MCF 10A (cell line): ENCODE measurements at regions of chr18 and their contacts with region 1.

Region 1: GRCh38 chr18:21444465-21445023 is 156.0 kb downstream of the ESCO1 start:
- DNase-seq: peak; percentile 66
- H3K4me3 Mint-ChIP-seq: no peak overlapping the region
- H3K27ac Mint-ChIP-seq: no peak overlapping the region
- H3K4me1 Mint-ChIP-seq: peaks cover 11% of the 10 kb centered on the region
- H3K27me3 Mint-ChIP-seq: no peaks in the 10 kb centered on the region
- CTCF ChIP-seq: peak; percentile 78

Region 2: GRCh38 chr18:21191596-21192307 is 252.8 kb before region 1 on chr18:
- CTCF ChIA-PET with region 1: interaction called, 192 read pairs
- POLR2A ChIA-PET with region 1: interaction called, 7 read pairs
- intact Hi-C with region 1: loop called (anchors 1 kb)
- DNase-seq: peak; percentile 65
- H3K4me3 Mint-ChIP-seq: no peak overlapping the region
- H3K27ac Mint-ChIP-seq: no peak overlapping the region
- H3K4me1 Mint-ChIP-seq: peaks cover 4% of the 10 kb centered on the region
- H3K27me3 Mint-ChIP-seq: peaks cover 24% of the 10 kb centered on the region
- CTCF ChIP-seq: peak; percentile 39

Region 3: DNA sequence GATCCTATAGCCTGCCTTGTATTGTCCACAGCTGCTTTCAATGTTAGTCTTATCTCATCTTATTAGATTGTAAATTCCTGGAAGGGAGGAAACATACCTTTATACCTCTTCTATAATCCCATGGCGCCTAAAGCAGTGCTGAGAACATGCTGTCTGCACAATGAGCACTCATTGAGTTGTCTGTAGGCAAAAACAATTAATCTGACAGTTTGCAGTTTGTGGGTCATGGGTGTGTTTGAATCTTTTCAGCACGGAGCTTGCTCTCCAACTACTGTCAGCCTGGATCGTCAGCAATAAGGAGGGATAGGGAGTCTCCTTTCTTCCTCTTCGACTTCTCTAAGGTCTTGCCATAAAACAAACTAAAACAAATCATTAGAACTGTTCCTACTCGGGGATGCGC is 229.1 kb before region 1 on chr18:
- CTCF ChIA-PET with region 1: interaction called, 19 read pairs
- POLR2A ChIA-PET with region 1: no interaction called
- intact Hi-C with region 1: no loop called
- DNase-seq: no peak
- H3K4me3 Mint-ChIP-seq: no peak overlapping the region
- H3K27ac Mint-ChIP-seq: no peak overlapping the region
- H3K4me1 Mint-ChIP-seq: no peaks in the 10 kb centered on the region
- H3K27me3 Mint-ChIP-seq: no peaks in the 10 kb centered on the region
- CTCF ChIP-seq: no peak

Region 4: DNA sequence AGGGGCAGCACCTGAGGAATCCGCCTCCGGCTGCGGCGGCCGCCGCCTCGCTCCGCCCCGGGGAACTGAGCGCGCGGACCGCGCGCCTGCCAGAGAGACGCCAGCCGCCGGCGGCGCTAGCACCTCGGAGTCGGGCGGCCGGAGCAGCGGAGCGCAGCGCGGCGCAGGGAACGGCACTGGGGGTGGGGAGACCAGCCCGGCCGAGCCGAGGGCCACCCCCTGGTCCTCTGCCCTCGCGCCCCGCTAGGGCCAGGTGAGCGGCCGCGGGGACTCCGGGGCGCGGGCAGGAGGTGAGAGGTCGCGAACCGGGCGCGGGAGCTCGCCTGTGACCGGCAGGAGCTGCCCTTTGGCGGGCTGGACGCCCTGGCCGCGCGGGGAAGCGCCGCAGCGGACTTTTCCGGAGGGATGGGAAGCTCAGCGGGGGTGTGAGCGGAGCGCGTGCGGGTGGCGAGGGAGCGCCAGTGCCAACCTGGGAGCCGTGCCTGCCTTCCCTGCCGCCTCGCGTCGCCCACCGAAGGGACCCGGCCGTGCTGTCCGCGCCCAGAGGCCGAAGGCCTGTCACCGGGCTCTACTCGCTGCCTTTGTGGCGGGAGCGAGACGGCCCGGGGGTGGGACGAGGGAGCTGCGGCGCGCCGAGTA is 202.3 kb before region 1 on chr18 and contains the start of gene GREB1L:
- CTCF ChIA-PET with region 1: interaction called, 27 read pairs
- POLR2A ChIA-PET with region 1: interaction called, 8 read pairs
- intact Hi-C with region 1: loop called (anchors 1 kb)
- DNase-seq: peak; percentile 67
- H3K4me3 Mint-ChIP-seq: peak within 1 kb of the TSS; percentile 78
- H3K27ac Mint-ChIP-seq: peak within 1 kb of the TSS; percentile 49
- H3K4me1 Mint-ChIP-seq: peaks cover 5% of the 10 kb centered on the region
- H3K27me3 Mint-ChIP-seq: no peaks in the 10 kb centered on the region
- CTCF ChIP-seq: peak; percentile 35
- total RNA-seq, gene GREB1L: 9.4 and 11.0 TPM in 2 replicates

Region 5: GRCh38 chr18:21391074-21391673 is 53.4 kb before region 1 on chr18:
- CTCF ChIA-PET with region 1: interaction called, 7 read pairs
- POLR2A ChIA-PET with region 1: interaction called, 7 read pairs
- intact Hi-C with region 1: loop called (anchors 1 kb)
- DNase-seq: peak; percentile 84
- H3K4me3 Mint-ChIP-seq: peak overlapping the region; percentile 23
- H3K27ac Mint-ChIP-seq: peak overlapping the region; percentile 51
- H3K4me1 Mint-ChIP-seq: peaks cover 16% of the 10 kb centered on the region
- H3K27me3 Mint-ChIP-seq: no peaks in the 10 kb centered on the region
- CTCF ChIP-seq: no peak

Region 6: GRCh38 chr18:21402272-21402671 is 42.3 kb before region 1 on chr18:
- CTCF ChIA-PET with region 1: no interaction called
- POLR2A ChIA-PET with region 1: no interaction called
- intact Hi-C with region 1: no loop called
- DNase-seq: no peak
- H3K4me3 Mint-ChIP-seq: no peak overlapping the region
- H3K27ac Mint-ChIP-seq: no peak overlapping the region
- H3K4me1 Mint-ChIP-seq: peaks cover 8% of the 10 kb centered on the region
- H3K27me3 Mint-ChIP-seq: no peaks in the 10 kb centered on the region
- CTCF ChIP-seq: no peak

Region 7: GRCh38 chr18:21433436-21433835 is 11.1 kb before region 1 on chr18:
- CTCF ChIA-PET with region 1: interaction called, 15 read pairs
- POLR2A ChIA-PET with region 1: no interaction called
- intact Hi-C with region 1: no loop called
- DNase-seq: peak; percentile 16
- H3K4me3 Mint-ChIP-seq: no peak overlapping the region
- H3K27ac Mint-ChIP-seq: no peak overlapping the region
- H3K4me1 Mint-ChIP-seq: no peaks in the 10 kb centered on the region
- H3K27me3 Mint-ChIP-seq: no peaks in the 10 kb centered on the region
- CTCF ChIP-seq: no peak